CD4-positive, alpha-beta memory T cell (primary cell): ENCODE measurements at regions of chr9 and their contacts with region 1.

Region 1: GRCh38 chr9:121185178-121185745 is 16.4 kb downstream of the RAB14 start:
- DNase-seq: no peak
- H3K4me3 ChIP-seq: no peak overlapping the region
- H3K4me3 Mint-ChIP-seq: peak overlapping the region in 4 of 8 donors; percentile 0 to 71 (median 44)
- H3K27ac ChIP-seq: peak overlapping the region; percentile 40
- H3K27ac Mint-ChIP-seq: peak overlapping the region; percentile 50 to 86 (median 80)
- H3K4me1 ChIP-seq: peaks cover 62% of the 10 kb centered on the region
- H3K4me1 Mint-ChIP-seq: peaks cover 48 to 75% (median 57%) of the 10 kb centered on the region in 4 donors
- H3K27me3 ChIP-seq: no peaks in the 10 kb centered on the region
- H3K27me3 Mint-ChIP-seq: no peaks in the 10 kb centered on the region

Region 2: DNA sequence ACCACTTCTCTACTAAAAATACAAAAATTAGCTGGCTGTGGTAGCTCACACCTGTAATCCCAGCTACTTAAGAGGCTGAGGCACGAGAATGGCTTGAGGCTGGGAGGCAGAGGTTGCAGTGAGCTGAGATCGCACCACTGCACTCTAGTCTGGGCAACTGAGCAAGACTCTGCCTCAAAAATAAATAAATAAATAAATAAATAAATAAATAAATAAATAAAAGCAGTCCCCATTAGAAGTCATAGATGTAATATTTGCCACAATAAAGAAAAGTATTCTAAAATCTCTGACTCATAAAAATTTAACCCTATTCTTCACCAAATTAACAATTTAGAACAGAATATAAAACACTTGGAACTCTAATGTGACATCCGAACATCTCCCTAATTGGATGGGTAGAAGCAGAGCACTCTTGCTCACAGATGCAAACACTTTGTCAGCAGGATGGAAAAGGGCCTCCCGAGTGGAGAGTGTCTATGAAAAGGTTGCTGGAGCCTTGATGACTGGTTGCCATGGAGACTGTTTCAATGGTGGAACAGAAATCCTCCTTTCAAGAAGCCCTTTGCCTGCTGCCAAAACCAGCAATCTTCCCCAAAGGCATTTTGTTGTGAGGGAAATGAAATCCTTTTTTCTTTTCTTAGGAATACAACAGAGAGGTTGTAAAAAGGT is 219.8 kb before region 1 on chr9:
- CTCF ChIA-PET with region 1: no interaction called
- POLR2A ChIA-PET with region 1: no interaction called
- intact Hi-C with region 1: no loop called
- DNase-seq: no peak
- H3K4me3 ChIP-seq: no peak overlapping the region
- H3K4me3 Mint-ChIP-seq: no peak overlapping the region
- H3K27ac ChIP-seq: no peak overlapping the region
- H3K27ac Mint-ChIP-seq: no peak overlapping the region
- H3K4me1 ChIP-seq: no peaks in the 10 kb centered on the region
- H3K4me1 Mint-ChIP-seq: no peaks in the 10 kb centered on the region
- H3K27me3 ChIP-seq: no peaks in the 10 kb centered on the region
- H3K27me3 Mint-ChIP-seq: no peaks in the 10 kb centered on the region

Region 3: GRCh38 chr9:121169094-121169601 is 16.1 kb before region 1 on chr9:
- CTCF ChIA-PET with region 1: interaction called, 10 read pairs
- POLR2A ChIA-PET with region 1: interaction called, 6 read pairs
- intact Hi-C with region 1: no loop called
- DNase-seq: peak; percentile 21 to 51 (median 28)
- H3K4me3 ChIP-seq: no peak overlapping the region
- H3K4me3 Mint-ChIP-seq: peak overlapping the region in 3 of 8 donors; percentile 24 to 38 (median 25)
- H3K27ac ChIP-seq: peak overlapping the region; percentile 23
- H3K27ac Mint-ChIP-seq: peak overlapping the region; percentile 50 to 90 (median 84)
- H3K4me1 ChIP-seq: peaks cover 17% of the 10 kb centered on the region
- H3K4me1 Mint-ChIP-seq: peaks cover 18 to 26% (median 23%) of the 10 kb centered on the region in 4 donors
- H3K27me3 ChIP-seq: no peaks in the 10 kb centered on the region
- H3K27me3 Mint-ChIP-seq: no peaks in the 10 kb centered on the region